ENCODE measurements at regions of chr7 and their contacts with region 1.

Region 1: GRCh38 chr7:158943713-158944112 is 87.4 kb downstream of the DYNC2I1 start:
- DNase-seq: no peak
- H3K4me3 Mint-ChIP-seq: no peak overlapping the region
- H3K27ac Mint-ChIP-seq: no peak overlapping the region
- H3K4me1 Mint-ChIP-seq: no peaks in the 10 kb centered on the region
- H3K27me3 Mint-ChIP-seq: no peaks in the 10 kb centered on the region
- CTCF ChIP-seq: no peak

Region 2: DNA sequence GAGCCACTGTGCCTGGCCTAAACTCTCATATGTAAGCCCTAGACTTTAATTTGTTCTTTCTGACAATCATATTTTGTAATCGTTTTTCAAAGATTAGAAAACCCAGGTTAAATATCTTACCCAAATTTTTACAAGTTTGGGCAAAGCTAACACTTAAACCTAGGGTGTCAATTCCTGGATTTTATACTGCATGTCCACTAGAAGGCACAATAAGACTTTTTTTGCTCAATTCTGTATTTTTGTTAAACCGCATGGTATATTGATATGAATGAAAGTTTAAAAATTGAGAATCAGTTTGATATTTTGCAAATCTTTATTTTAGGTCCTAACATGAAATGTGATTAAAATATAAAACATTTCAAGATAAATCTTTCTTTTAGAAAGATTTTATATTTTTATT is 58.1 kb before region 1 on chr7:
- CTCF ChIA-PET with region 1: no interaction called
- POLR2A ChIA-PET with region 1: no interaction called
- intact Hi-C with region 1: loop called (anchors 2 kb)
- DNase-seq: peak; percentile 14
- H3K4me3 Mint-ChIP-seq: no peak overlapping the region
- H3K27ac Mint-ChIP-seq: no peak overlapping the region
- H3K4me1 Mint-ChIP-seq: no peaks in the 10 kb centered on the region
- H3K27me3 Mint-ChIP-seq: no peaks in the 10 kb centered on the region
- CTCF ChIP-seq: peak; percentile 37